CD8-positive, alpha-beta T cell (primary cell): ENCODE measurements at regions of chr6 and their contacts with region 1.

Region 1: GRCh38 chr6:147311218-147311617 is 107.0 kb downstream of the STXBP5 start:
- DNase-seq: no peak
- ATAC-seq: no peak
- H3K4me3 ChIP-seq: no peak overlapping the region
- H3K4me3 Mint-ChIP-seq: no peak overlapping the region
- H3K27ac ChIP-seq: no peak overlapping the region
- H3K27ac Mint-ChIP-seq: peak overlapping the region; percentile 7
- H3K4me1 ChIP-seq: no peaks in the 10 kb centered on the region
- H3K4me1 Mint-ChIP-seq: peaks cover 3% of the 10 kb centered on the region
- H3K27me3 ChIP-seq: no peaks in the 10 kb centered on the region
- H3K27me3 Mint-ChIP-seq: no peaks in the 10 kb centered on the region
- CTCF ChIP-seq: no peak

Region 2: DNA sequence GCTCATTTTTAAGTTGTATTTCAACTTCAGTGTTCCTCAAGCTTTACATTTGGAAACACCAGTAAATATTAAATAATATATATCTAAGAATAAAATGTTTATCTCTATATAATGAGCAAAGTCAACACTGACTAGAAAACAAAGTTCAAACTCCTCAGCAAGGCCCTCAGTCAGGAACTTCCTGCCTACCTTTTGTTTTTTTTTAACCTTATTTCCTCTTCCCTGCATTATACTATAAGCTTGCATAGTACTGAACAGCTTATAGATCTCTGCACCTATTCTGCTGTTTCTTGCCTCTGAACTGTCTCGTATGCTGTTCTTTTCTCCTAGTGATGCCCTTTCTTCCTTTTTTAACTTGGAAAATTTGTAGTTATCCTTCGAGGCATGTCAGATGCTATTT is 682.9 kb before region 1 on chr6:
- CTCF ChIA-PET with region 1: no interaction called
- POLR2A ChIA-PET with region 1: no interaction called
- intact Hi-C with region 1: no loop called
- DNase-seq: no peak
- ATAC-seq: no peak
- H3K4me3 ChIP-seq: no peak overlapping the region
- H3K4me3 Mint-ChIP-seq: no peak overlapping the region
- H3K27ac ChIP-seq: no peak overlapping the region
- H3K27ac Mint-ChIP-seq: no peak overlapping the region
- H3K4me1 ChIP-seq: no peaks in the 10 kb centered on the region
- H3K4me1 Mint-ChIP-seq: no peaks in the 10 kb centered on the region
- H3K27me3 ChIP-seq: no peaks in the 10 kb centered on the region
- H3K27me3 Mint-ChIP-seq: peaks cover 4% of the 10 kb centered on the region
- CTCF ChIP-seq: no peak

Region 3: DNA sequence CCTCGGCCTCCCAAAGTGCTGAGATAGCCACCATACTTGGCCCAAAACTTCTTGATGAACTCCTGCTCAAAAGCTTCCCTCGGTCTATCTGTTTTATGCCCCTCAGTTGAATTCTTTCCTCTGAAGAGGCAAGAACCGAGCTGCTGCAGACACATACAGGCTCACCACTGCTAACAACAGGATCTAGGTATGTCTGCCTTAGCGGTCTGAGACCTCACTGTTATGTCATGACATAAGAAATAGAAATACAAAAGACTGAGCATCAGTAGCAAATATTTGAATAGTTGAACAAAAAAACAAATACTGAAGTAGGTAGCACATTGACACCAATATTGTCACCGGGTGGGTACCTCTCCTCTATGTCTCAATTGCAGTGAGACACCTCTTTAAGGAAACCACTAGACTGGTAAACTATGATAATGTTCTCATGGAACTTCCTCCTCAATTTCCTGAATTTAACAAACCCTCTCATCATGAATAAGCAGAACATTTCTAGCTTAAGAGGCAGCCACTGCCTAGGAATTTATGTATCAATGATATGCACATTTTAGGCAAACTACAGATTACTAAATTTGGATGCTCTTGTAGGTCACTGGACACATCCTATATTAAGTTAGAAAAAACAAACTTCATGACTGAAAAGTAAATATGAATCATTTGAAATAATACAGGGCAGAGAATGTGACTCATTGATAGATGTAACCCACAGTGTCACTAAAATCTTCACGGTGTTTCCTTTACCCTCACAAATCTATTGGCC is 116.4 kb before region 1 on chr6:
- CTCF ChIA-PET with region 1: no interaction called
- POLR2A ChIA-PET with region 1: no interaction called
- intact Hi-C with region 1: no loop called
- DNase-seq: no peak
- ATAC-seq: peak; percentile 38
- H3K4me3 ChIP-seq: no peak overlapping the region
- H3K4me3 Mint-ChIP-seq: no peak overlapping the region
- H3K27ac ChIP-seq: no peak overlapping the region
- H3K27ac Mint-ChIP-seq: no peak overlapping the region
- H3K4me1 ChIP-seq: no peaks in the 10 kb centered on the region
- H3K4me1 Mint-ChIP-seq: peaks cover 11% of the 10 kb centered on the region
- H3K27me3 ChIP-seq: no peaks in the 10 kb centered on the region
- H3K27me3 Mint-ChIP-seq: no peaks in the 10 kb centered on the region
- CTCF ChIP-seq: no peak

Region 4: GRCh38 chr6:147281895-147282565 is 29.2 kb before region 1 on chr6:
- CTCF ChIA-PET with region 1: no interaction called
- POLR2A ChIA-PET with region 1: no interaction called
- intact Hi-C with region 1: no loop called
- DNase-seq: no peak
- ATAC-seq: no peak
- H3K4me3 ChIP-seq: no peak overlapping the region
- H3K4me3 Mint-ChIP-seq: no peak overlapping the region
- H3K27ac ChIP-seq: no peak overlapping the region
- H3K27ac Mint-ChIP-seq: peak overlapping the region; percentile 39
- H3K4me1 ChIP-seq: no peaks in the 10 kb centered on the region
- H3K4me1 Mint-ChIP-seq: peaks cover 35% of the 10 kb centered on the region
- H3K27me3 ChIP-seq: no peaks in the 10 kb centered on the region
- H3K27me3 Mint-ChIP-seq: no peaks in the 10 kb centered on the region
- CTCF ChIP-seq: no peak

Region 5: DNA sequence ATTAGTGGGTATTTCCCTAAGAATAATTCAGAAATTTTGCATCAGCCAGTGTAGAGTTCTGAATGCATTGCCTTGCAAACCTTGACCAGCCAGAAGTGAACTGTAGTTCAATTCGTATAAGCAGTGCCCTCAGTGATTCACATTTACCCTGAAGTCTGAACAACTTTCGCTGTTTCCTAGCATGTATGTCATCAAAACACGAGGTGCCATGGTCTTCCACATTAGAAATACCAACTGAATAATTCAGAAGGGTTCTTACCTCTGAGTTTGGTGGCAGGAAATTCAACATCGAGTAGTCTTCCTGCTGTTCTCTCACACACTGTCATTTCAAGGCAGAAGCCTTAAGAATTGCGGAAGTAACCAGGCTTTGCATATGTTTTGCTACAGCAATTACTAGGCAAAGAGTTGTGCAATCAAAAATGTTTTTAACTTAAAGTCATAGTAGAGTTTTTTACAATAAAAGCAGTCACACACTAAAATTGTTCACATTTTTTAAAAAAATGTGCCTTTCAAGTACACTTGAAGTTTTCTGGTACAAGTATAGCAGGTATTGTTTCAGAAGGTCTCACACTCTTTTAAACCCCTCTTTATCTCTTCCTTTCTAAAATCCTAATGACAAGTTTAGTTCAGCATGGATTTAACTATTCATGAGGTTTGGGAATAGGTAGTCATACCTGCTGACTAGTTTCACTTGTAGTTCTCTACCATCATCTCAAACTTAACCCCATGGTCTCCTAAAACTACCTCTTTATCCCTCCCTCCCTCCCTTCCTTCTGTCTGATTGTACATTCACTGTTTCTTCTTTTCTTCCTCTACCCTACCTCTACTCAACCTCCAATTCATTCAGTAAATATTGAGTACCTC is 11.3 kb after region 1 on chr6:
- CTCF ChIA-PET with region 1: no interaction called
- POLR2A ChIA-PET with region 1: no interaction called
- intact Hi-C with region 1: loop called in 1 of 2 experiments (anchors 1 kb)
- DNase-seq: peak in 4 of 9 experiments; percentile 10 to 63 (median 28)
- ATAC-seq: peak; percentile 92
- H3K4me3 ChIP-seq: peak overlapping the region; percentile 8 to 31
- H3K4me3 Mint-ChIP-seq: peak overlapping the region; percentile 59
- H3K27ac ChIP-seq: peak overlapping the region; percentile 17 to 79
- H3K27ac Mint-ChIP-seq: peak overlapping the region; percentile 89
- H3K4me1 ChIP-seq: peaks cover 17% of the 10 kb centered on the region
- H3K4me1 Mint-ChIP-seq: peaks cover 25% of the 10 kb centered on the region
- H3K27me3 ChIP-seq: no peaks in the 10 kb centered on the region
- H3K27me3 Mint-ChIP-seq: no peaks in the 10 kb centered on the region
- CTCF ChIP-seq: no peak